ENCODE measurements at regions of chr1 and their contacts with region 1.

Region 1: DNA sequence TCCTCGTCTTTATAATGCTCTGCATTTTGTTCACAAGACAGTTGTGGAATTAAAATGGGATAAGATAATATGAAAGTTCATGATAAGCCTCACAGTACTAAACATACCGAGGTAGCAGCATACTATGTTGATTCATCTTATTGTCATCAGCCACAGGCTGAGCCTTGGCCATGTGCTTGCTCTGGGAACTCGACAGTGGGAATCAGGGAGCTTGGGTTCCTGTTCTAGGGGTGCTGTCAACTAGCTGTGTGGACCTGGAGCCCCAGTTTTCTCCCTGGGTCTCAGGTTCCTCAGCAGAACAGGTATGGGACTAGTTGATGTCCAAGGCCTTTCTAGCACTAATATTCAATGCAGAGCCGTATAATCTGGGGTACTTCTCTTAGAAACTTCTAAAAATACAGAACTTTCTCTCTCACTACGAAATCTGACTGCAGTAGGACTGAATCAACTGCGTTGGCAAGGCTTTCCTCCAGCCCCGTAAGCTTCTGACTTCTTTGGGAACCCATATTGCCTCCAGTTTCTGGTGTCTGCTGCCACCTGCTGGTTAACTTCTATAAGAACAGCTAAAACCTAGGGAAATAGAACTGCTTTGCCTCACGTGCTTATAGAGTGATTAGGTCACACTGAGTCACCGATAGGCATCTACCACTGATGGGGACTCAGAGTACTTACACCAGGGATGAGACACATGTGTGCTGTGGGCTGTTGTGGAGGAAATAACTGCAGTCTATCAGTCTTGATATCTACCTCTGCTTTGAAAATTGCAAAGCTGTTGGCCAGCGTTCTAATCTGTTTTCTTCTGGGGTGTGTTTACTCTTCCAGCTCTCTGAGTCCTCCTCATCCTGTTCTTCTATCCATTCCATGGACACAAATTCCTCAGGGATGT is 110.9 kb downstream of the RGL1 start:
- DNase-seq: peak; percentile 96
- H3K4me3 ChIP-seq: no peak overlapping the region
- H3K27ac ChIP-seq: peak overlapping the region; percentile 39
- H3K4me1 ChIP-seq: peaks cover 12% of the 10 kb centered on the region
- H3K27me3 ChIP-seq: no peaks in the 10 kb centered on the region
- CTCF ChIP-seq: peak; percentile 72 to 82

Region 2: DNA sequence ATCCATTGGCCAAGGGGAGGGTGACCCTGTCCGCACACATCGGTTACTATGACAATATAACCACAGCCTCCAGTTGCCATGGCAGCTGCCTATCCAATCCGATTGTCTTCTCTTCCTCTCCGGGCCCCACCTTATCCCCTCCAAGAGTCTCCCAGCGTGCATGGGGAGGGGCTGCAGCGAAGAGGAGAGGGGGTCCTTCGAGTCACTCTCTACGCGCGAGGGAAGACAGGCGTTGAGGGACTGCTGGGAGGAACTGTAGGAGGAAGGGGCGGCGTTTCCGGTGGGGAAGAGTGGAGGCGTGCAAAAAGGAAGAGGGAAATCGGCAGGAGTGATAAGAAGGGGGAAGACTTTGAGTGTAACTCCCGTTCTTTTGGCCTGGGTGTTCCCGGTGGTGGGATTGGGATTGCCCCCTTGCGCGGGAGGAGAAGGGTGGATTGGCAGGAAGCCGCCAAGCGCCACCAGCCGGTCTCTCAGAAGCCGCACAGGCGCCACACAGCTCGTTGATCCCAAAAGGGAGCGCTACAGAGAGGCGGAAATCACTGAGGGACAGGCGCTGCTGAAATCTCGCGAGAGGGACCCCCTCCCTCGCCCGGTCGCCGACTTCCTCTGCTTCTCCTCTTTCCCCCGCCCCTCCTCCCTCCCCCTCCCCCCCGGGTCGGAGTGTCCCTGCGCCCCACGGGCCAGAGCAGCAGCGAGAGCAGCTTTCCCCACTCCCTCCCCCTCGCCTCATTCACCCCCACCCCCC is 444.0 kb before region 1 on chr1:
- CTCF ChIA-PET with region 1: no interaction called
- dilution Hi-C with region 1: no loop called
- in situ Hi-C with region 1: no loop called
- intact Hi-C with region 1: loop called (anchors 10 kb)
- DNase-seq: peak; percentile 96
- H3K4me3 ChIP-seq: peak overlapping the region; percentile 88 to 99 (median 99)
- H3K27ac ChIP-seq: peak overlapping the region; percentile 96
- H3K4me1 ChIP-seq: peaks cover 25% of the 10 kb centered on the region
- H3K27me3 ChIP-seq: no peaks in the 10 kb centered on the region
- CTCF ChIP-seq: no peak

Region 3: GRCh38 chr1:183635606-183636333 is 280.1 kb before region 1 on chr1 and contains the start of gene ARPC5:
- CTCF ChIA-PET with region 1: no interaction called
- dilution Hi-C with region 1: no loop called
- in situ Hi-C with region 1: loop called in 1 of 2 experiments (anchors 10 kb)
- intact Hi-C with region 1: loop called (anchors 1 kb)
- DNase-seq: peak; percentile 99
- H3K4me3 ChIP-seq: peak within 1 kb of the TSS; percentile 85 to 95 (median 90)
- H3K27ac ChIP-seq: peak within 1 kb of the TSS; percentile 82
- H3K4me1 ChIP-seq: peaks cover 25% of the 10 kb centered on the region
- H3K27me3 ChIP-seq: no peaks in the 10 kb centered on the region
- CTCF ChIP-seq: no peak
- total RNA-seq, gene ARPC5: 162 to 186 TPM

Region 4: GRCh38 chr1:183655562-183656075 is 260.2 kb before region 1 on chr1:
- CTCF ChIA-PET with region 1: interaction called, 4 read pairs
- dilution Hi-C with region 1: no loop called
- in situ Hi-C with region 1: loop called in 1 of 2 experiments (anchors 10 kb)
- intact Hi-C with region 1: loop called (anchors 1 kb)
- DNase-seq: peak; percentile 56
- H3K4me3 ChIP-seq: no peak overlapping the region
- H3K27ac ChIP-seq: no peak overlapping the region
- H3K4me1 ChIP-seq: peaks cover 4% of the 10 kb centered on the region
- H3K27me3 ChIP-seq: no peaks in the 10 kb centered on the region
- CTCF ChIP-seq: peak; percentile 75 to 84

Region 5: GRCh38 chr1:183739741-183740271 is 176.1 kb before region 1 on chr1:
- CTCF ChIA-PET with region 1: no interaction called
- dilution Hi-C with region 1: no loop called
- in situ Hi-C with region 1: no loop called
- intact Hi-C with region 1: loop called (anchors 1 kb)
- DNase-seq: no peak
- H3K4me3 ChIP-seq: no peak overlapping the region
- H3K27ac ChIP-seq: no peak overlapping the region
- H3K4me1 ChIP-seq: no peaks in the 10 kb centered on the region
- H3K27me3 ChIP-seq: no peaks in the 10 kb centered on the region
- CTCF ChIP-seq: no peak

Region 6: GRCh38 chr1:184222652-184223052 is 306.8 kb after region 1 on chr1:
- CTCF ChIA-PET with region 1: no interaction called
- dilution Hi-C with region 1: no loop called
- in situ Hi-C with region 1: no loop called
- intact Hi-C with region 1: loop called (anchors 5 kb)
- DNase-seq: peak; percentile 48
- H3K4me3 ChIP-seq: no peak overlapping the region
- H3K27ac ChIP-seq: no peak overlapping the region
- H3K4me1 ChIP-seq: no peaks in the 10 kb centered on the region
- H3K27me3 ChIP-seq: no peaks in the 10 kb centered on the region
- CTCF ChIP-seq: peak; percentile 91 to 94